CD8-positive, alpha-beta T cell (primary cell): ENCODE measurements at regions of chr10 and their contacts with region 1.

Region 1: DNA sequence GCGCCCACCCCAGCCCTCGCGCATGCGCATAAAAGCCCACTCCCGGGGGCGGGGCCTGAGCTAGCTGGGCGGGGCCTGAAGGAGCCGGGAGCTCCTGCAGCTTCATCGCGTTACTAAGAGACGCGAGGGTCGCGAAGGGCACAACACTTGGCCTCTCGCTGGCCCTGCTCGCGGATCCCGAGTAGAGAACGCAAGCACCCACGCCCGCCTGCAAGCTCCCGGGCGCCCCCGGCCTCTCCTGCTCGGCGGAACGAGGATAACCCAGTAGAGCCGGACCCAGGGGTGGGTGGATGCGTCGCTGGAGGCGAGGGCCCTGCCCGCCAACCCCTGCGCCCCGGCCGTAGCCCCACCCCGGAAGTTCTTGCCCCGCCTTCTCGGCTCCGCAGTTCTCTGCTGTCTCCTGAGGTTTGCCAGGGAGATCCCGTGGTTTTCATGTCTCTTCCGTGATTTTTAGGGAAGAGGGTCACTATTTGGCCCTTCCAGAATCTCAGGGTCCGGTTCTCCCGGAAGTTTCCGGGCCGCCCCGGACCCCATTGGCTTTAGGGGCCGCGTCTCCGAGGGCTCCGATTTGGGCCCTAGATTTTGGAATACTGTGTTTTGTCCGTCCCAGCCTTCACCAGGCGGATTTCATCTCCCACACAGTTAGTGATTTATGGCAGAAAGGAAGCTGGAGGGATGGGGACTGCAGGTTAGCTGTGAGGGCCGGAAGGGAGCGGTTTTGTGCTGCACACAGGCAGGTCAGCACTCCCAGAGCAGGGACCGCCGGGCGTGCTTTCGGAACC is at the start of gene MEIG1:
- DNase-seq: peak; percentile 79 to 98 (median 92)
- ATAC-seq: peak; percentile 83
- H3K4me3 ChIP-seq: peak within 1 kb of the TSS; percentile 77 to 95
- H3K4me3 Mint-ChIP-seq: peak within 1 kb of the TSS; percentile 97
- H3K27ac ChIP-seq: peak within 1 kb of the TSS; percentile 86 to 88
- H3K27ac Mint-ChIP-seq: peak within 1 kb of the TSS; percentile 95
- H3K4me1 ChIP-seq: peaks cover 11% of the 10 kb centered on the region
- H3K4me1 Mint-ChIP-seq: peaks cover 24% of the 10 kb centered on the region
- H3K27me3 ChIP-seq: no peaks in the 10 kb centered on the region
- H3K27me3 Mint-ChIP-seq: no peaks in the 10 kb centered on the region
- CTCF ChIP-seq: no peak
- total RNA-seq, gene MEIG1: not detected

Region 2: GRCh38 chr10:14056610-14057332 is 902.7 kb before region 1 on chr10:
- CTCF ChIA-PET with region 1: no interaction called
- POLR2A ChIA-PET with region 1: no interaction called
- intact Hi-C with region 1: no loop called
- DNase-seq: no peak
- ATAC-seq: no peak
- H3K4me3 ChIP-seq: no peak overlapping the region
- H3K4me3 Mint-ChIP-seq: no peak overlapping the region
- H3K27ac ChIP-seq: no peak overlapping the region
- H3K27ac Mint-ChIP-seq: no peak overlapping the region
- H3K4me1 ChIP-seq: no peaks in the 10 kb centered on the region
- H3K4me1 Mint-ChIP-seq: no peaks in the 10 kb centered on the region
- H3K27me3 ChIP-seq: no peaks in the 10 kb centered on the region
- H3K27me3 Mint-ChIP-seq: no peaks in the 10 kb centered on the region
- CTCF ChIP-seq: no peak

Region 3: GRCh38 chr10:14507176-14507575 is 452.3 kb before region 1 on chr10:
- CTCF ChIA-PET with region 1: no interaction called
- POLR2A ChIA-PET with region 1: no interaction called
- intact Hi-C with region 1: loop called in 1 of 2 experiments (anchors 10 kb)
- DNase-seq: peak in 7 of 9 experiments; percentile 14 to 89 (median 57)
- ATAC-seq: peak; percentile 88
- H3K4me3 ChIP-seq: no peak overlapping the region
- H3K4me3 Mint-ChIP-seq: peak overlapping the region; percentile 54
- H3K27ac ChIP-seq: peak overlapping the region; percentile 38 to 46
- H3K27ac Mint-ChIP-seq: peak overlapping the region; percentile 88
- H3K4me1 ChIP-seq: peaks cover 24% of the 10 kb centered on the region
- H3K4me1 Mint-ChIP-seq: peaks cover 37% of the 10 kb centered on the region
- H3K27me3 ChIP-seq: no peaks in the 10 kb centered on the region
- H3K27me3 Mint-ChIP-seq: no peaks in the 10 kb centered on the region
- CTCF ChIP-seq: no peak

Region 4: DNA sequence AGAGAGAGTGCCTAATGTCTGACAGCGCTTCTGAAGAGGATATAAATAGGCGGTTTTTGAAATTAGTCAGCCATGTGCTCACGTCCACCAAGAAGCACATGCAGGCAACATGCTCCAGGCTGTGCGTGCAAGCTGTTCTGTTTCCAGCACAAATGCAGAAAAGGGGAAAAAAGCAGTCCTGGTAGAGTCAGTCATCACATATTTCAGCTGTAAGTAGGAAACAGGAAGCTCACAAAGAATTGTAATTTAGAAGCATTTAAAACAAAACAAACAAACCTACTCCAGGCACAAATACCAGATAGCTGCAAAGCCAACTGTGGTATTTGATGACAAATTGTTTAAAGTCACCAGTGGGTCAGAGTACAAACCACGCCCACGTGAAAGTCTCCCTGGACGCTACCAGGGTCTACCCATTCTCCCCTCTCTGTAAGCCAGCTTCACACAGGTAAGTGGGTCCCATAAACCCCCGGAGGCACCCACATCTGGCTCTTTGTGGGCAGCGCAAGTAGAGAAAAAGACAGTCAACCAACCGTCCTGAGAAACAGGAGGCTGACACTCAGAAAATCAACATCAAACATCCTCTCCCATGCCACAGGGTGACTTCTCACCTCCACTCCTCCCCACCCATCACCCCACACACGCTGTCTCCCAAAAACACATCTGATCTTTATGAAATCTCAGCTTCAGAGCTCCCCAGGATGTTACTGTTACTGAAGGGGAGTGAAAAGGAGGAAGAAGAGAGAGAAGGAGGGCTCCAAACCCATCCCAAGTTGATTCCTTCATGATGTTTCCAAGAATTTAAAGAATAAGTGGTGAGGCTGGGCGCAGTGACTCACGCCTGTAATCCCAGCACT is 371.2 kb before region 1 on chr10:
- CTCF ChIA-PET with region 1: no interaction called
- POLR2A ChIA-PET with region 1: no interaction called
- intact Hi-C with region 1: loop called in 1 of 2 experiments (anchors 10 kb)
- DNase-seq: peak in 3 of 9 experiments; percentile 55 to 79 (median 65)
- ATAC-seq: peak; percentile 35
- H3K4me3 ChIP-seq: peak overlapping the region; percentile 32 to 34
- H3K4me3 Mint-ChIP-seq: peak overlapping the region; percentile 78
- H3K27ac ChIP-seq: peak overlapping the region; percentile 71 to 82
- H3K27ac Mint-ChIP-seq: peak overlapping the region; percentile 97
- H3K4me1 ChIP-seq: peaks cover 89% of the 10 kb centered on the region
- H3K4me1 Mint-ChIP-seq: peaks cover 92% of the 10 kb centered on the region
- H3K27me3 ChIP-seq: no peaks in the 10 kb centered on the region
- H3K27me3 Mint-ChIP-seq: no peaks in the 10 kb centered on the region
- CTCF ChIP-seq: no peak

Region 5: GRCh38 chr10:14604181-14605142 is 355.0 kb before region 1 on chr10:
- CTCF ChIA-PET with region 1: no interaction called
- POLR2A ChIA-PET with region 1: no interaction called
- intact Hi-C with region 1: loop called in 1 of 2 experiments (anchors 10 kb)
- DNase-seq: peak; percentile 39 to 86 (median 73)
- ATAC-seq: peak; percentile 71
- H3K4me3 ChIP-seq: peak overlapping the region; percentile 55 to 66
- H3K4me3 Mint-ChIP-seq: peak overlapping the region; percentile 93
- H3K27ac ChIP-seq: peak overlapping the region; percentile 48
- H3K27ac Mint-ChIP-seq: peak overlapping the region; percentile 94
- H3K4me1 ChIP-seq: peaks cover 44% of the 10 kb centered on the region
- H3K4me1 Mint-ChIP-seq: peaks cover 50% of the 10 kb centered on the region
- H3K27me3 ChIP-seq: no peaks in the 10 kb centered on the region
- H3K27me3 Mint-ChIP-seq: no peaks in the 10 kb centered on the region
- CTCF ChIP-seq: peak; percentile 16

Region 6: GRCh38 chr10:14878266-14879054 is 81.0 kb before region 1 on chr10 and contains the start of gene SUV39H2:
- CTCF ChIA-PET with region 1: interaction called, 3 read pairs
- POLR2A ChIA-PET with region 1: interaction called, 9 read pairs
- intact Hi-C with region 1: loop called in 1 of 2 experiments (anchors 1 kb)
- DNase-seq: peak; percentile 78 to 96 (median 92)
- ATAC-seq: peak; percentile 80
- H3K4me3 ChIP-seq: peak within 1 kb of the TSS; percentile 92 to 94
- H3K4me3 Mint-ChIP-seq: peak within 1 kb of the TSS; percentile 96
- H3K27ac ChIP-seq: peak within 1 kb of the TSS; percentile 67 to 69
- H3K27ac Mint-ChIP-seq: peak within 1 kb of the TSS; percentile 79
- H3K4me1 ChIP-seq: peaks cover 26% of the 10 kb centered on the region
- H3K4me1 Mint-ChIP-seq: peaks cover 31% of the 10 kb centered on the region
- H3K27me3 ChIP-seq: no peaks in the 10 kb centered on the region
- H3K27me3 Mint-ChIP-seq: no peaks in the 10 kb centered on the region
- CTCF ChIP-seq: no peak
- total RNA-seq, gene SUV39H2: 2.6 to 3.1 TPM

Region 7: DNA sequence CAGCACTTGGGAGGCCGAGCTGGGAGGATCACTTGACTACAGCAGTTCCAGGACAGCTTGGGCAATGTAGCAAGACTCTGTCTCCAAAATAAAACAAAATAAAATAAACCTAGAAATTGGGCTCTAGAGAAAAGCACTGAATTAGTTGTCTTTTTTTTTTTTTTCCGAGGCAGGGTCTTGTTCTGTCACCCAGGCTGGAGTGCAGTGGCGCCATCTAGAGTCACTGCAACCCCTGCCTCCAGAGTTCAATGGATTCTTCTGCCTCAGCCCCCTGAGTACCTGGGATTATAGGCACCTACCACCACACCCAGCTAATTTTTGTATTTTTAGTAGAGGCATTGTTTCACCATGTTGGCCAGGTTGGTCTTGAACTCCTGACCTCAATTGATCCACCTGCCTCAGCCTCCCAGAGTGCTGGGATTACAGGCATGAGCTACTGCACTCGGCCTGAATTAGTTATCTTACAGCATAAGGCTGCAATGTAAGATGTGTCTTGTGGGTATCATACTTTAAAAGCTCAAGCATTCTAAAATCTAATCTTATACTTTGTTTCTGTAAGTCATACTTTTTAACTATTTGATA is 12.5 kb after region 1 on chr10:
- CTCF ChIA-PET with region 1: interaction called, 11 read pairs
- POLR2A ChIA-PET with region 1: interaction called, 3 read pairs
- intact Hi-C with region 1: no loop called
- DNase-seq: peak in 8 of 9 experiments; percentile 21 to 70 (median 51)
- ATAC-seq: peak; percentile 54
- H3K4me3 ChIP-seq: no peak overlapping the region
- H3K4me3 Mint-ChIP-seq: no peak overlapping the region
- H3K27ac ChIP-seq: no peak overlapping the region
- H3K27ac Mint-ChIP-seq: no peak overlapping the region
- H3K4me1 ChIP-seq: no peaks in the 10 kb centered on the region
- H3K4me1 Mint-ChIP-seq: no peaks in the 10 kb centered on the region
- H3K27me3 ChIP-seq: no peaks in the 10 kb centered on the region
- H3K27me3 Mint-ChIP-seq: peaks cover 14% of the 10 kb centered on the region
- CTCF ChIP-seq: peak; percentile 62

Region 8: DNA sequence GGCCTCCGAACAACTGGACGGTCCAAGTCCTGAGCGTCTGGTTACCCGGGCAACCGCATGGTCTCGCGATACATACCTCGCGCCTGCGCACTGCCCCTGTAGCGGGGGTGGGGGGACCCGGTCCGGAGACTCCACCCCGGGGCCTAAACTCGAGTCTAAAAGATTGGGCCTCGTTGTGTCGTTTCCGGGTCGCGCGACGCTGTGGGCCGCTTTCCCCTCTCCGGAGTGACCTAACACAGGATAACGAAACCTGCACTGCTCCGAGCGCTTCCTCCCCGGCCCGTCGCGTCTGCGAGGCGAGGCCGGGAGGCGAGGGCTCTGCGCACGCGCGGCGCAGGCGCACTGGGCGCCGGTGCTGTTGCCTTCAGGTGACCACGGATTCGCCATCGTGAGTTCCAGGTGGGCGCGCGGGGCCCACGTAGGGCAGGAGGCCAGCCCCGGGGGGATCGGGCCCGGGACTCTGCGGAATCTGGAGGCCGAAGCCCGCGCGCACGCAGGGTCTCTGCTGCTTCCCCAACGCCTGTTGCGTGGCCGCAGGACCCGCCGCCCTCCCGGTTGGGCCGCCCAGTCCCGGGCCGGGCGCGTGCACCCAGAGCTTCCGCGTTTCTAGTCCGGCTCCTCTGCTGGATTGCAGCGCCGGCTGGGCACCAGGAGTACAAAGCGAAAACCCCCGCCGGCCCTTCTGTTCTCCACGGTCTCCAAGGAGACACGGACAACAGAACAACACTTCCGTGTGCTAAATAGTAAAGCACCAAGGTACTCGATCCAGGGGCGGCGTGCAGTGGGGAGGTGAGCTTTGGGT is 137.7 kb after region 1 on chr10 and contains the start of gene RPP38:
- CTCF ChIA-PET with region 1: no interaction called
- POLR2A ChIA-PET with region 1: no interaction called
- intact Hi-C with region 1: loop called (anchors 1 to 5 kb)
- DNase-seq: peak; percentile 85 to 98 (median 95)
- ATAC-seq: peak; percentile 83
- H3K4me3 ChIP-seq: peak within 1 kb of the TSS; percentile 74 to 88
- H3K4me3 Mint-ChIP-seq: peak within 1 kb of the TSS; percentile 97
- H3K27ac ChIP-seq: peak within 1 kb of the TSS; percentile 92 to 96
- H3K27ac Mint-ChIP-seq: peak within 1 kb of the TSS; percentile 97
- H3K4me1 ChIP-seq: peaks cover 28% of the 10 kb centered on the region
- H3K4me1 Mint-ChIP-seq: peaks cover 35% of the 10 kb centered on the region
- H3K27me3 ChIP-seq: no peaks in the 10 kb centered on the region
- H3K27me3 Mint-ChIP-seq: no peaks in the 10 kb centered on the region
- CTCF ChIP-seq: no peak
- total RNA-seq, gene RPP38: 10.6 to 12.3 TPM